A673 (cell line): ENCODE measurements at regions of chr17 and their contacts with region 1.

Region 1: GRCh38 chr17:8186787-8187516 is 3.0 kb downstream of the BORCS6 start:
- DNase-seq: peak; percentile 98
- H3K4me3 ChIP-seq: peak overlapping the region; percentile 82
- H3K27ac ChIP-seq: peak overlapping the region; percentile 85
- H3K4me1 ChIP-seq: peaks cover 21% of the 10 kb centered on the region
- H3K27me3 ChIP-seq: no peaks in the 10 kb centered on the region
- CTCF ChIP-seq: peak; percentile 49

Region 2: DNA sequence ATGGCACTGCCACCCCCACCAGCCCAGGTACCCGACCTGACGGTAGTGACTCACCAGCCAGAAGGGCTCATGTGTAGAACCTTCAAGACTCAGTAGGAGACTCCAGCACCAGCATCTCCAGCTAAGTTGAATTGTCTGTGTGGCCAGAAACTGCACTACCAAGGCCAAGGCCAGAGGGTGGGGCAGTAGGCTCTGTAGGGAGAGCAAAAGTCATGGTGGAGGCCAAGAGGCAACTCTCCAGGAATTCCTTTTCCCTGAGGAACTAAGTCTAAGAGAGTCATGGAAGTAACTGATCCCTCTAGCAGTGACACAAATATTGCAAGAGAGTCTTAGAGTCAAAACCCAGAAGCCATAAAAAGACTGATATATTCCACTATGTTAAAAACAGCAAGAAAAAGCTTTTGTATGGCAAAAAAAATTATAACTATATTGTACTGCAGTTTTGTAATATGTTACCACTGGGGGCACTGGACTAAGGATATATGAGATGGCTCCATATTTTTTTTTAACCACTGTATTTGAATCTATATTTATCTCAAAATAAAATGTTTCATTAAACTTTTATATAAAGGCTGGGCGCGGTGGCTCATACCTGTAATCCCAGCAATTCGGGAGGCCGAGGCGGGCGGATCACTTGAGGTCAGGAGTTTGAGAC is 214.7 kb before region 1 on chr17:
- CTCF ChIA-PET with region 1: no interaction called
- POLR2A ChIA-PET with region 1: interaction called, 12 read pairs
- intact Hi-C with region 1: no loop called
- DNase-seq: no peak
- H3K4me3 ChIP-seq: no peak overlapping the region
- H3K27ac ChIP-seq: no peak overlapping the region
- H3K4me1 ChIP-seq: no peaks in the 10 kb centered on the region
- H3K27me3 ChIP-seq: no peaks in the 10 kb centered on the region
- CTCF ChIP-seq: peak; percentile 30; the same call in 1 of the 2 replicates

Region 3: GRCh38 chr17:8138672-8139371 is 48.1 kb before region 1 on chr17:
- CTCF ChIA-PET with region 1: no interaction called
- POLR2A ChIA-PET with region 1: interaction called, 3 read pairs
- intact Hi-C with region 1: loop called (anchors 2 kb)
- DNase-seq: peak; percentile 99
- H3K4me3 ChIP-seq: peak overlapping the region; percentile 55
- H3K27ac ChIP-seq: peak overlapping the region; percentile 87
- H3K4me1 ChIP-seq: no peaks in the 10 kb centered on the region
- H3K27me3 ChIP-seq: no peaks in the 10 kb centered on the region
- CTCF ChIP-seq: peak; percentile 91

Region 4: GRCh38 chr17:8209909-8210760 is 23.2 kb after region 1 on chr17 and contains the start of gene AURKB:
- CTCF ChIA-PET with region 1: interaction called, 8 read pairs
- POLR2A ChIA-PET with region 1: interaction called, 5 read pairs
- intact Hi-C with region 1: loop called (anchors 1 kb)
- DNase-seq: peak; percentile 99
- H3K4me3 ChIP-seq: peak within 1 kb of the TSS; percentile 82
- H3K27ac ChIP-seq: peak within 1 kb of the TSS; percentile 94
- H3K4me1 ChIP-seq: peaks cover 11% of the 10 kb centered on the region
- H3K27me3 ChIP-seq: no peaks in the 10 kb centered on the region
- CTCF ChIP-seq: no peak
- total RNA-seq, gene AURKB: 209 and 230 TPM in 2 replicates

Region 5: DNA sequence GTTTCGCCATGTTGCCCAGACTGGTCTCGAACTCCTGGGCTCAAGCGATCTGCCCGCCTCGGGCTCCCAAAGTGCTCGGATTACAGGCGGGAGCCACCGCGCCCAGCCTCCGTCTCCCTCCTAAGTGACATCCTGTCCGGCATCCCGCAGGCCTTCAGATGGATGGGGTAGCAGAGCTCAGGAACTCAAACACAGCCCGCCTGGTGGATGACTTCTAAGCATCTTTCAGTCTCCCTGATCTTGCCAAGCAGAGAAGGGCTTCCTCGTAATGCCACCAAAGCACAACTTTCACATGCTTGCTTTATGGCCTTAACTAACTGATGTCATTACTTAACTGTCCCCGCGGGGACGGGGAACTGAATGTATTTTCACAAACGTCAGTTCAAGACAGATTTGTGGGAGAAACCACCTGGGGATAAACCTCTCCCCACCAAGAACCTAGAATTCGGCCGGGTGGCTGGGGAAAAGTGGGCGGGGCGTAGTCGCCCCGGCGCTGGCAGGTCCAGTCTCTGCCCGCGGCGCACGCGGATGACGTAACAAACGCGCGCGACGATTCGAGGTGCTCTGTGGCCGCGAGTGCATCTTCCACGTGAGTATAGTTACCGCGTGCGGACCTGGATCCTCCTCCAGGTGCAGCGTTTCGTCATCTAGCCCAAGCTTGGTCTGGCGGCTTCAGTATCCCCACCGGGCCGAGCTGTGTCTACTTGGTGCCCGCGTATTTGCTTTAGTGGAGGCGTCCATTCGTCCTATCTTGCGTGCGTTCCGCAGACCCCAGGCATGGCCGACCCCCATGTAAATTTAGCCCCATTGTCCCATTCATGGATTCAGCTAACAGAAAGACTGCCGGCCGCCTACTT is 62.0 kb after region 1 on chr17 and contains the start of gene PFAS:
- CTCF ChIA-PET with region 1: no interaction called
- POLR2A ChIA-PET with region 1: no interaction called
- intact Hi-C with region 1: loop called (anchors 1 kb)
- DNase-seq: peak; percentile 96
- H3K4me3 ChIP-seq: peak within 1 kb of the TSS; percentile 83
- H3K27ac ChIP-seq: peak within 1 kb of the TSS; percentile 97
- H3K4me1 ChIP-seq: peaks cover 10% of the 10 kb centered on the region
- H3K27me3 ChIP-seq: no peaks in the 10 kb centered on the region
- CTCF ChIP-seq: no peak
- total RNA-seq, gene PFAS: 163 and 165 TPM in 2 replicates